Mammary epithelial cell (primary cell): ENCODE measurements at regions of chr11 and their contacts with region 1.

Region 1: GRCh38 chr11:355581-356458 is 13.5 kb upstream of the B4GALNT4 start:
- DNase-seq: peak; percentile 65
- H3K4me3 ChIP-seq: peak overlapping the region in 2 of 3 experiments; percentile 37 to 56
- H3K27ac ChIP-seq: peak overlapping the region; percentile 65
- H3K4me1 ChIP-seq: peaks cover 21% of the 10 kb centered on the region
- H3K27me3 ChIP-seq: no peaks in the 10 kb centered on the region
- CTCF ChIP-seq: no peak

Region 2: GRCh38 chr11:236774-237767 is 118.7 kb before region 1 on chr11 and contains the start of gene PSMD13:
- CTCF ChIA-PET with region 1: no interaction called
- dilution Hi-C with region 1: no loop called
- in situ Hi-C with region 1: loop called in 1 of 2 experiments (anchors 10 kb)
- intact Hi-C with region 1: no loop called
- DNase-seq: peak; percentile 73
- H3K4me3 ChIP-seq: peak within 1 kb of the TSS; percentile 87 to 98 (median 98)
- H3K27ac ChIP-seq: peak within 1 kb of the TSS; percentile 93
- H3K4me1 ChIP-seq: peaks cover 15% of the 10 kb centered on the region
- H3K27me3 ChIP-seq: no peaks in the 10 kb centered on the region
- CTCF ChIP-seq: no peak
- total RNA-seq, gene PSMD13: 89.5 to 133 TPM

Region 3: GRCh38 chr11:257766-258493 is 97.9 kb before region 1 on chr11:
- CTCF ChIA-PET with region 1: no interaction called
- dilution Hi-C with region 1: loop called (anchors 5 kb)
- in situ Hi-C with region 1: no loop called
- intact Hi-C with region 1: loop called (anchors 5 kb)
- DNase-seq: no peak
- H3K4me3 ChIP-seq: no peak overlapping the region
- H3K27ac ChIP-seq: no peak overlapping the region
- H3K4me1 ChIP-seq: no peaks in the 10 kb centered on the region
- H3K27me3 ChIP-seq: no peaks in the 10 kb centered on the region
- CTCF ChIP-seq: peak; percentile 5 to 37

Region 4: GRCh38 chr11:304915-305843 is 50.6 kb before region 1 on chr11:
- CTCF ChIA-PET with region 1: no interaction called
- dilution Hi-C with region 1: no loop called
- in situ Hi-C with region 1: loop called (anchors 5 to 10 kb)
- intact Hi-C with region 1: loop called (anchors 1 kb)
- DNase-seq: peak; percentile 25
- H3K4me3 ChIP-seq: no peak overlapping the region
- H3K27ac ChIP-seq: no peak overlapping the region
- H3K4me1 ChIP-seq: peaks cover 8% of the 10 kb centered on the region
- H3K27me3 ChIP-seq: no peaks in the 10 kb centered on the region
- CTCF ChIP-seq: peak; percentile 70 to 71

Region 5: GRCh38 chr11:518463-519250 is 162.8 kb after region 1 on chr11:
- CTCF ChIA-PET with region 1: interaction called, 14 read pairs
- dilution Hi-C with region 1: no loop called
- in situ Hi-C with region 1: no loop called
- intact Hi-C with region 1: no loop called
- DNase-seq: peak; percentile 97
- H3K4me3 ChIP-seq: peak overlapping the region in 1 of 3 experiments; percentile 13
- H3K27ac ChIP-seq: peak overlapping the region; percentile 48
- H3K4me1 ChIP-seq: peaks cover 21% of the 10 kb centered on the region
- H3K27me3 ChIP-seq: no peaks in the 10 kb centered on the region
- CTCF ChIP-seq: peak; percentile 72 to 85

Region 6: DNA sequence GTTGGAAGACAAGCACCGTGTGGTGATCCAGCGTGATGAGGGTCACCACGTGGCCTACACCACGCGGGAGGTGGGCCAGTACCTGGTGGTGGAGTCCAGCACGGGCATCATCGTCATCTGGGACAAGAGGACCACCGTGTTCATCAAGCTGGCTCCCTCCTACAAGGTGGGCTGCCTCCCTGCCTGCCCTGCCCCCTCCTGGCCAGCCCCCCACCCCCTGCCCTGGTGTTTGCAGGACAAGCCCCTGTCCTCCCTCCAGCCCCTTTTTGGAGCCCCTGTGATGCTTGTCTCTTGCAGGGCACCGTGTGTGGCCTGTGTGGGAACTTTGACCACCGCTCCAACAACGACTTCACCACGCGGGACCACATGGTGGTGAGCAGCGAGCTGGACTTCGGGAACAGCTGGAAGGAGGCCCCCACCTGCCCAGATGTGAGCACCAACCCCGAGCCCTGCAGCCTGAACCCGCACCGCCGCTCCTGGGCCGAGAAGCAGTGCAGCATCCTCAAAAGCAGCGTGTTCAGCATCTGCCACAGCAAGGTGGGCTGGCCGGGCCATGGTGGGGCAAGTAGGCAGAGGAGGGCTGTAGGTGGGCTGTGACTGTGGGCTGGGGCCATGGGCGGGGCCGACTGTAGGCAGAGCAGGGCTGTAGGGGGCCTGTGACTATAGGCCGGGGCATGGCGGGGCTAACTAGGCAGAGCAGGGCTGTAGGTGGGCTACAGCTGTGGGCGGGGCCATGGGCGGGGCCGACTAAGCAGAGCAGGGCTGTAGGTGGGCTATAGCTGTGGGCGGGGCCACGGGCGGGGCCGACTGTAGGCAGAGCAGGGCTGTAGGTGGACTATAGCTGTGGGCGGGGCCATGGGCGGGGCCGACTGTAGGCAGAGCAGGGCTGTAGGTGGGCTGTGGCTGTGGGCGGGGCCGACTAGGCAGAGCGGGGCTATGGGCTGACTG is 732.4 kb after region 1 on chr11:
- CTCF ChIA-PET with region 1: no interaction called
- dilution Hi-C with region 1: no loop called
- in situ Hi-C with region 1: no loop called
- intact Hi-C with region 1: no loop called
- DNase-seq: no peak
- H3K4me3 ChIP-seq: no peak overlapping the region
- H3K27ac ChIP-seq: no peak overlapping the region
- H3K4me1 ChIP-seq: peaks cover 20% of the 10 kb centered on the region
- H3K27me3 ChIP-seq: no peaks in the 10 kb centered on the region
- CTCF ChIP-seq: no peak